Dorsolateral prefrontal cortex (tissue), 120 donors: ENCODE measurements at regions of chr5 and their contacts with region 1.

Region 1: DNA sequence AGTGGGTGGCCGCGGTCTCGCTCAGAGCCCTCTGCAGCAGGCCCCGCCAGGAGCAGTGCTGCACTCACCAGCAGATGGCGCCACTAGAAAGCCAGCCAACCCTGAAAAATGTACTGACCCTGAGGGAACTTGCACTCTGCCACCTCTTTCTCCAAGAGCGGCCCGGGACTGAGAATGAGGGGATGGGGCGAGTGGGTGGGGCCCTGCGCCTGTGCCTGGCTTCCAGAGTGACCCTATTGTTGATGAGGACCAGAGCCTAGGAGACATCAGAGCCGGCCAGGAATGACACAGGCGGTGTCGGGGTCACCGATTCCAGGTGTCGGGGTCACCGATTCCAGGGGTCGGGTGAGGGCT is 2.9 kb upstream of the IL17B start:
- DNase-seq: peak in 9 of 10 donors; percentile 37 to 72 (median 54)
- H3K4me3 ChIP-seq: peak overlapping the region in 1 of 59 donors; percentile 5
- H3K27ac ChIP-seq: peak overlapping the region in 15 of 59 donors; percentile 3 to 77 (median 49)
- H3K27me3 ChIP-seq: peaks cover 0 to 3% (median 0%) of the 10 kb centered on the region in 45 donors
- CTCF ChIP-seq: peak; percentile 61 to 94 (median 88)

Region 2: GRCh38 chr5:149434162-149435014 is 52.4 kb after region 1 on chr5:
- intact Hi-C with region 1: loop called (anchors 5 kb)
- DNase-seq: peak in 5 of 10 donors; percentile 41 to 67 (median 59)
- H3K4me3 ChIP-seq: no peak overlapping the region
- H3K27ac ChIP-seq: no peak overlapping the region
- H3K27me3 ChIP-seq: no peaks in the 10 kb centered on the region
- CTCF ChIP-seq: peak; percentile 65 to 88 (median 80)

Region 3: DNA sequence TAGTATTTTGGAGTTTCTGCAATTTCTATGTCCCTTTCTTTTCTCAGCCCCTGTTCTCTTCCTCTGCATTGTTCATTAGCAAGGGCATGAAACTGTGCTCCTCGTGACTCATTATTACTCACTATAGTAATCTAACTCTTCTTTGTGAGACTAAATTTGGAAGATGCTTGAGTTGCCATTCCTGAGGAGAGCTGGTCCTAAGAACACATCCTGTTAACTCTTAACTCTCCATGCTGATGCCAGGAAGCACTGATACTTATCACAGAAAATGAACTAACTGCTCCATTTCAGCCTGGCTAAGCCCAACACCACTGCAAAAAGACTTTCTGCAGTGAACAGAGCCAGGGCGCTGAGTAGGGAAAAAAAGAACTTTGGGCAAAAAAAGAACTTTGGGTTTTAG is 179.9 kb after region 1 on chr5:
- intact Hi-C with region 1: loop called in 1 of 2 experiments (anchors 5 kb)
- DNase-seq: no peak
- H3K4me3 ChIP-seq: peak overlapping the region in 1 of 59 donors; percentile 10
- H3K27ac ChIP-seq: peak overlapping the region in 30 of 59 donors; percentile 0 to 78 (median 48)
- H3K27me3 ChIP-seq: no peaks in the 10 kb centered on the region
- CTCF ChIP-seq: no peak

Region 4: DNA sequence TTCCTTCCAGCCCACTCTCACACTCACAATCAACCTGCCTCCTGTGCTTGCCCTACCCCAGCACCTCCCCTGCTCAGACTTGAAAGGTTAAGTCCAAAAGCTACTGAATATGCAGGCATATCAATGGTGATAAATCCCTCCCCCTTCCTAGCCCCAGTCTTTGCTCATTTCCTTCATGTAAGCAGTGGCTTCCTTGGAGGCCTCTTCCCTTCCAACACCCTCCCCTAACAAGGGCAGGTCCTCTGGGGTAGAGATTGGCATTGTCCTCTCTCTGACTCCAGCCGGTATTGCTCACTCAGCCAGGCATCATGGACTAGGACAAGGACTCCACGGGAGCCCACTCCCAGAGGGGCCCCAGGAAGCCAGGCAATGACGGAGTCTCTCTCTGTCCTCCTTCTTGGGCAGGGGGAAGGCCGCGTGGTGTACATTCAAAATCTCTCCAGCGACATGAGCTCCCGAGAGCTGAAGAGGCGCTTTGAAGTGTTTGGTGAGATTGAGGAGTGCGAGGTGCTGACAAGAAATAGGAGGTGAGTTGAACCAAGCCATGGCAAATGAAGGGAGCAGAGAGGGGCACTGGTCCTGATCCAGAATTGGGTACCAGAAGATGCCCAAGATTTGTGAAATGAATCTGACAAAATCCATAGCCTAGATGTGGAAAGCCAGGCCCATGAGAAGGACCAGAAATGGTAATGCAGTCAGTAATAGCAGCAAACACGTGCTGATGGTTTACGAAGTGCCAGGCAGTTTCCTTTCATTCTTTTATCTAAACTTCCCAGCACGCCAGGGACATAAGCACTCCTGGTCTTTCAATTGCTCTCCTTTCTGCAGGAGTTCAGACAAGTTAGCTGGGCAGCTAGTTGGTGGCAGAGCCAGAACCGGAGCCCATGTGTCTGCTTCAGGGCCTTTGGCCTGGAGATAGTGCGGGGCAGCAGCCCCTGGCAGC is 460.2 kb after region 1 on chr5:
- intact Hi-C with region 1: no loop called
- DNase-seq: no peak
- H3K4me3 ChIP-seq: no peak overlapping the region
- H3K27ac ChIP-seq: peak overlapping the region in 1 of 59 donors; percentile 18
- H3K27me3 ChIP-seq: no peaks in the 10 kb centered on the region
- CTCF ChIP-seq: no peak